ENCODE measurements at regions of chr12 and their contacts with region 1.

Region 1: GRCh38 chr12:115916910-115917668 is 360.4 kb downstream of the MED13L start:
- DNase-seq: peak; percentile 91
- H3K4me3 ChIP-seq: peak overlapping the region in 2 of 8 donors; percentile 11 to 49
- H3K27ac ChIP-seq: no peak overlapping the region
- H3K4me1 ChIP-seq: peaks cover 4 to 9% (median 5%) of the 10 kb centered on the region in 6 donors
- H3K27me3 ChIP-seq: peaks cover 3 to 72% (median 15%) of the 10 kb centered on the region in 7 donors
- CTCF ChIP-seq: peak; percentile 83 to 97 (median 92)
- POLR2A ChIP-seq: no peak

Region 2: GRCh38 chr12:114655934-114656749 is 1260.9 kb before region 1 on chr12:
- intact Hi-C with region 1: loop called (anchors 2 kb)
- DNase-seq: no peak
- H3K4me3 ChIP-seq: no peak overlapping the region
- H3K27ac ChIP-seq: no peak overlapping the region
- H3K4me1 ChIP-seq: no peaks in the 10 kb centered on the region
- H3K27me3 ChIP-seq: peaks cover 0 to 56% (median 0%) of the 10 kb centered on the region in 7 donors
- CTCF ChIP-seq: no peak
- POLR2A ChIP-seq: no peak

Region 3: DNA sequence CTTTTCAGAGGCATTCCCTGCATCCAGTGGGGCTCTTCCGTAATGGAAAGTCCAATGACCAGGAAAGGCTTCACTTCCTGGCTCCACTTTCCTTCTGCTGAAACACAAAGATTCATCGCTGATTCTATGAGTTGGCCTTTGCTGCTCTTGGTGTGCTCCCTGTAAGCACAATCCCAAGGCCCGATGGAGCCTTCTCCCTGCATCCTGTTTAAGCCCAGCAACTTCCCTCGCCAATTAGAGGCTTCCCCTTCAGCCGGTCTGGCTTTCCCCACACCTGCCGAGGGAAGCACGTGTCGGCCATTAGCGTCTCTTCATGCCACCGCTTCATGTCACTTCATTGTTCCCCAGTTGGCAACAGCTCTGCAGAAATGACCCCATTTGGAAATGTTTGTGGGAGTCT is 333.5 kb before region 1 on chr12:
- intact Hi-C with region 1: no loop called
- DNase-seq: no peak
- H3K4me3 ChIP-seq: no peak overlapping the region
- H3K27ac ChIP-seq: no peak overlapping the region
- H3K4me1 ChIP-seq: no peaks in the 10 kb centered on the region
- H3K27me3 ChIP-seq: peaks cover 0 to 26% (median 0%) of the 10 kb centered on the region in 7 donors
- CTCF ChIP-seq: no peak
- POLR2A ChIP-seq: no peak

Measured in spleen (tissue), 13 donors.